Activated CD8-positive, alpha-beta T cell treated with anti-CD3 and anti-CD28 coated beads for 36 hours (primary cell): ENCODE measurements at regions of chr3 and their contacts with region 1.

Region 1: GRCh38 chr3:193780810-193781472 is 187.9 kb downstream of the OPA1 start:
- DNase-seq: peak; percentile 44
- ATAC-seq: peak; percentile 39
- H3K4me3 Mint-ChIP-seq: no peak overlapping the region
- H3K27ac Mint-ChIP-seq: no peak overlapping the region
- H3K4me1 Mint-ChIP-seq: peaks cover 4% of the 10 kb centered on the region
- H3K27me3 Mint-ChIP-seq: peaks cover 31% of the 10 kb centered on the region
- CTCF ChIP-seq: peak; percentile 64

Region 2: GRCh38 chr3:193768070-193768394 is 12.9 kb before region 1 on chr3:
- CTCF ChIA-PET with region 1: interaction called, 12 read pairs
- POLR2A ChIA-PET with region 1: no interaction called
- intact Hi-C with region 1: no loop called
- DNase-seq: no peak
- ATAC-seq: no peak
- H3K4me3 Mint-ChIP-seq: no peak overlapping the region
- H3K27ac Mint-ChIP-seq: no peak overlapping the region
- H3K4me1 Mint-ChIP-seq: no peaks in the 10 kb centered on the region
- H3K27me3 Mint-ChIP-seq: peaks cover 4% of the 10 kb centered on the region
- CTCF ChIP-seq: no peak